Heart right ventricle (tissue), 16 donors: ENCODE measurements at regions of chr11 and their contacts with region 1.

Region 1: GRCh38 chr11:66686801-66687750 is 9.4 kb upstream of the RBM4B start:
- DNase-seq: no peak
- ATAC-seq: peak in 4 of 8 donors; percentile 9 to 44 (median 26)
- H3K4me3 ChIP-seq: no peak overlapping the region
- H3K27ac ChIP-seq: no peak overlapping the region
- H3K4me1 ChIP-seq: no peaks in the 10 kb centered on the region
- H3K27me3 ChIP-seq: no peaks in the 10 kb centered on the region
- CTCF ChIP-seq: no peak

Region 2: GRCh38 chr11:66480117-66480938 is 206.7 kb before region 1 on chr11 and contains the start of gene DPP3:
- intact Hi-C with region 1: no loop called
- DNase-seq: peak; percentile 97 to 98
- ATAC-seq: peak; percentile 96 to 98 (median 98)
- H3K4me3 ChIP-seq: peak within 1 kb of the TSS; percentile 68 to 98 (median 77)
- H3K27ac ChIP-seq: peak within 1 kb of the TSS; percentile 67 to 96 (median 92)
- H3K4me1 ChIP-seq: peaks cover 0 to 22% (median 17%) of the 10 kb centered on the region in 9 donors
- H3K27me3 ChIP-seq: no peaks in the 10 kb centered on the region
- CTCF ChIP-seq: no peak
- total RNA-seq, gene DPP3: 8.8 to 25.2 (median 14.7) TPM

Region 3: GRCh38 chr11:66568124-66568916 is 118.8 kb before region 1 on chr11 and contains the start of gene CTSF:
- intact Hi-C with region 1: loop called in 1 of 10 experiments (anchors 5 kb)
- DNase-seq: peak; percentile 85 to 91
- ATAC-seq: peak; percentile 89 to 98 (median 96)
- H3K4me3 ChIP-seq: peak within 1 kb of the TSS; percentile 41 to 94 (median 70)
- H3K27ac ChIP-seq: peak within 1 kb of the TSS in 7 of 10 donors; percentile 17 to 61 (median 50)
- H3K4me1 ChIP-seq: peaks cover 3 to 14% (median 13%) of the 10 kb centered on the region in 9 donors
- H3K27me3 ChIP-seq: peaks cover 0 to 22% (median 0%) of the 10 kb centered on the region in 7 donors
- CTCF ChIP-seq: no peak
- total RNA-seq, gene CTSF: 29.1 to 75.5 (median 51.3) TPM